Spleen (tissue), 13 donors: ENCODE measurements at regions of chr7 and their contacts with region 1.

Region 1: GRCh38 chr7:102456327-102456726 is 8.3 kb downstream of the ALKBH4 start:
- DNase-seq: no peak
- H3K4me3 ChIP-seq: no peak overlapping the region
- H3K27ac ChIP-seq: no peak overlapping the region
- H3K4me1 ChIP-seq: peaks cover 0 to 13% (median 0%) of the 10 kb centered on the region in 6 donors
- H3K27me3 ChIP-seq: no peaks in the 10 kb centered on the region
- CTCF ChIP-seq: no peak
- POLR2A ChIP-seq: no peak

Region 2: GRCh38 chr7:102170393-102170970 is 285.8 kb before region 1 on chr7:
- intact Hi-C with region 1: no loop called
- DNase-seq: no peak
- H3K4me3 ChIP-seq: peak overlapping the region in 2 of 8 donors; percentile 0 to 10
- H3K27ac ChIP-seq: peak overlapping the region in 7 of 8 donors; percentile 26 to 69 (median 60)
- H3K4me1 ChIP-seq: peaks cover 0 to 9% (median 0%) of the 10 kb centered on the region in 6 donors
- H3K27me3 ChIP-seq: no peaks in the 10 kb centered on the region
- CTCF ChIP-seq: no peak
- POLR2A ChIP-seq: no peak

Region 3: GRCh38 chr7:102407910-102408309 is 48.4 kb before region 1 on chr7:
- intact Hi-C with region 1: loop called (anchors 5 kb)
- DNase-seq: no peak
- H3K4me3 ChIP-seq: no peak overlapping the region
- H3K27ac ChIP-seq: peak overlapping the region in 5 of 8 donors; percentile 14 to 45 (median 37)
- H3K4me1 ChIP-seq: peaks cover 5 to 62% (median 28%) of the 10 kb centered on the region in 6 donors
- H3K27me3 ChIP-seq: no peaks in the 10 kb centered on the region
- CTCF ChIP-seq: no peak
- POLR2A ChIP-seq: no peak